CD8-positive, alpha-beta T cell (primary cell): ENCODE measurements at regions of chrX and their contacts with region 1.

Region 1: GRCh38 chrX:155881158-155881993 is at the start of gene VAMP7:
- DNase-seq: peak; percentile 59 to 90 (median 78)
- ATAC-seq: peak; percentile 96
- H3K4me3 ChIP-seq: peak within 1 kb of the TSS; percentile 80 to 82
- H3K4me3 Mint-ChIP-seq: peak within 1 kb of the TSS; percentile 93
- H3K27ac ChIP-seq: peak within 1 kb of the TSS; percentile 77 to 88
- H3K27ac Mint-ChIP-seq: peak within 1 kb of the TSS; percentile 96
- H3K4me1 ChIP-seq: peaks cover 12% of the 10 kb centered on the region
- H3K4me1 Mint-ChIP-seq: peaks cover 28% of the 10 kb centered on the region
- H3K27me3 ChIP-seq: no peaks in the 10 kb centered on the region
- H3K27me3 Mint-ChIP-seq: peaks cover 3% of the 10 kb centered on the region
- CTCF ChIP-seq: no peak
- total RNA-seq, gene VAMP7: 23.9 to 24.2 TPM

Region 2: GRCh38 chrX:155263854-155264628 is 617.3 kb before region 1 on chrX and contains the start of gene RAB39B:
- CTCF ChIA-PET with region 1: no interaction called
- POLR2A ChIA-PET with region 1: no interaction called
- intact Hi-C with region 1: loop called in 1 of 2 experiments (anchors 2 kb)
- DNase-seq: peak; percentile 29 to 84 (median 68)
- ATAC-seq: peak; percentile 93
- H3K4me3 ChIP-seq: peak within 1 kb of the TSS; percentile 69 to 79
- H3K4me3 Mint-ChIP-seq: peak within 1 kb of the TSS; percentile 68
- H3K27ac ChIP-seq: peak within 1 kb of the TSS; percentile 86 to 88
- H3K27ac Mint-ChIP-seq: peak within 1 kb of the TSS; percentile 78
- H3K4me1 ChIP-seq: peaks cover 17% of the 10 kb centered on the region
- H3K4me1 Mint-ChIP-seq: peaks cover 30% of the 10 kb centered on the region
- H3K27me3 ChIP-seq: no peaks in the 10 kb centered on the region
- H3K27me3 Mint-ChIP-seq: no peaks in the 10 kb centered on the region
- CTCF ChIP-seq: no peak
- total RNA-seq, gene RAB39B: 3.5 to 3.6 TPM

Region 3: DNA sequence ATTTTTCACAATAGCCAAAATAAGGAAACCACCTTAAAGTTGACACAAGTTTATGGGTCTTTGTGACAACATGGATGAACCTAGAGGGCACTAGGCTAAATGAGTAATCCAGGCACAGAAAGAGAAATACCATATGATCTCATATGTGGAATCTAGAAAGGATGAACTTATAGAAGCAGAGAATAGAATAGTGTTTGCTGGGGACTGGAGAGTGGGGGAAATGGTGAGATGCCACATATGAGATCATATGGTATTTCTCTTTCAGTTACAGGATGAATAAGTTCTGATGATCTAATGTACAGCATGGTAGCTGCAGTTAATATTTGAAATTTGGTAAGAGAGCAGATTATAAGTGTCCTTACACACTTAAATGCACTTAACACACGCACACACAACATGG is 463.6 kb before region 1 on chrX:
- CTCF ChIA-PET with region 1: no interaction called
- POLR2A ChIA-PET with region 1: no interaction called
- intact Hi-C with region 1: no loop called
- DNase-seq: no peak
- ATAC-seq: no peak
- H3K4me3 ChIP-seq: no peak overlapping the region
- H3K4me3 Mint-ChIP-seq: no peak overlapping the region
- H3K27ac ChIP-seq: no peak overlapping the region
- H3K27ac Mint-ChIP-seq: no peak overlapping the region
- H3K4me1 ChIP-seq: no peaks in the 10 kb centered on the region
- H3K4me1 Mint-ChIP-seq: no peaks in the 10 kb centered on the region
- H3K27me3 ChIP-seq: no peaks in the 10 kb centered on the region
- H3K27me3 Mint-ChIP-seq: no peaks in the 10 kb centered on the region
- CTCF ChIP-seq: no peak

Region 4: DNA sequence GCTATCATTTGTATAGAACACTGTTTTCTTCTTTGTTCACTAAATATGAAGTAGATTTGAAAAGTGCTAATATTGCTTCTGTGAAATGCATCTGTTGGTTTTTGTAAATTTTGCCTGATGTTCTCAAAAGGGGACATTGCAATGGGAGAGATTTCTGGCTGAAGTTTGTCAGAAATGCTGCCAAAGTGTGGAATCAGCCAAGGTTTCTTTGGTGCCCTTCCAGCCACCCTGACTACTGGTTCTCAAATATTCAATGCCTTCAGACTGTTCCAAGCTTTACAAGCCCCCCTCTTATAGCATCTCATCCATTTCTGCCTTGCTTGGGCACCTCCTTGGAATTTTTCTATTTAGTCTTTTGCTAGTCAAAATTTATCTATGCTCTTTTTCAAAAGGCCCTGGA is 208.0 kb before region 1 on chrX:
- CTCF ChIA-PET with region 1: no interaction called
- POLR2A ChIA-PET with region 1: no interaction called
- intact Hi-C with region 1: no loop called
- DNase-seq: no peak
- ATAC-seq: no peak
- H3K4me3 ChIP-seq: no peak overlapping the region
- H3K4me3 Mint-ChIP-seq: no peak overlapping the region
- H3K27ac ChIP-seq: no peak overlapping the region
- H3K27ac Mint-ChIP-seq: no peak overlapping the region
- H3K4me1 ChIP-seq: no peaks in the 10 kb centered on the region
- H3K4me1 Mint-ChIP-seq: no peaks in the 10 kb centered on the region
- H3K27me3 ChIP-seq: no peaks in the 10 kb centered on the region
- H3K27me3 Mint-ChIP-seq: no peaks in the 10 kb centered on the region
- CTCF ChIP-seq: no peak